Stomach (tissue), 19 donors: ENCODE measurements at regions of chr13 and their contacts with region 1.

Region 1: GRCh38 chr13:30865123-30866049 is 40.7 kb upstream of the MEDAG start:
- DNase-seq: peak; percentile 75 to 95
- H3K4me3 ChIP-seq: no peak overlapping the region
- H3K27ac ChIP-seq: peak overlapping the region; percentile 60 to 83 (median 78)
- H3K4me1 ChIP-seq: peaks cover 5 to 48% (median 35%) of the 10 kb centered on the region in 4 donors
- H3K27me3 ChIP-seq: no peaks in the 10 kb centered on the region
- CTCF ChIP-seq: peak in 5 of 7 experiments; percentile 72 to 86 (median 76)
- EP300 ChIP-seq: no peak
- POLR2A ChIP-seq: no peak

Region 2: GRCh38 chr13:30510811-30511371 is 354.5 kb before region 1 on chr13:
- intact Hi-C with region 1: no loop called
- DNase-seq: no peak
- H3K4me3 ChIP-seq: no peak overlapping the region
- H3K27ac ChIP-seq: no peak overlapping the region
- H3K4me1 ChIP-seq: no peaks in the 10 kb centered on the region
- H3K27me3 ChIP-seq: no peaks in the 10 kb centered on the region
- CTCF ChIP-seq: no peak
- EP300 ChIP-seq: no peak
- POLR2A ChIP-seq: no peak

Region 3: GRCh38 chr13:30639671-30640070 is 225.7 kb before region 1 on chr13:
- intact Hi-C with region 1: no loop called
- DNase-seq: no peak
- H3K4me3 ChIP-seq: no peak overlapping the region
- H3K27ac ChIP-seq: no peak overlapping the region
- H3K4me1 ChIP-seq: peaks cover 0 to 18% (median 9%) of the 10 kb centered on the region in 4 donors
- H3K27me3 ChIP-seq: no peaks in the 10 kb centered on the region
- CTCF ChIP-seq: no peak
- EP300 ChIP-seq: no peak
- POLR2A ChIP-seq: no peak

Region 4: GRCh38 chr13:31050486-31051400 is 185.4 kb after region 1 on chr13:
- intact Hi-C with region 1: loop called (anchors 10 kb)
- DNase-seq: no peak
- H3K4me3 ChIP-seq: no peak overlapping the region
- H3K27ac ChIP-seq: no peak overlapping the region
- H3K4me1 ChIP-seq: peaks cover 9 to 19% (median 14%) of the 10 kb centered on the region in 4 donors
- H3K27me3 ChIP-seq: peaks cover 0 to 6% (median 0%) of the 10 kb centered on the region in 3 donors
- CTCF ChIP-seq: no peak
- EP300 ChIP-seq: no peak
- POLR2A ChIP-seq: no peak